ENCODE measurements at regions of chr3 and their contacts with region 1.

Region 1: GRCh38 chr3:190321789-190322603 is at the start of gene CLDN1:
- DNase-seq: peak; percentile 82 to 87
- ATAC-seq: peak; percentile 90 to 99 (median 96)
- H3K4me3 ChIP-seq: peak within 1 kb of the TSS; percentile 73
- H3K27ac ChIP-seq: no peak within 1 kb of the TSS
- H3K4me1 ChIP-seq: no peaks in the 10 kb centered on the region
- H3K27me3 ChIP-seq: no peaks in the 10 kb centered on the region
- CTCF ChIP-seq: peak; percentile 97
- total RNA-seq, gene CLDN1: 0.25 to 0.62 (median 0.39) TPM in 3 of 4 donors, not detected in the other

Region 2: GRCh38 chr3:189961525-189962161 is 360.4 kb before region 1 on chr3:
- intact Hi-C with region 1: loop called (anchors 5 kb)
- DNase-seq: peak; percentile 70 to 76
- ATAC-seq: peak; percentile 74 to 95 (median 87)
- H3K4me3 ChIP-seq: no peak overlapping the region
- H3K27ac ChIP-seq: no peak overlapping the region
- H3K4me1 ChIP-seq: no peaks in the 10 kb centered on the region
- H3K27me3 ChIP-seq: no peaks in the 10 kb centered on the region
- CTCF ChIP-seq: peak; percentile 91

Region 3: DNA sequence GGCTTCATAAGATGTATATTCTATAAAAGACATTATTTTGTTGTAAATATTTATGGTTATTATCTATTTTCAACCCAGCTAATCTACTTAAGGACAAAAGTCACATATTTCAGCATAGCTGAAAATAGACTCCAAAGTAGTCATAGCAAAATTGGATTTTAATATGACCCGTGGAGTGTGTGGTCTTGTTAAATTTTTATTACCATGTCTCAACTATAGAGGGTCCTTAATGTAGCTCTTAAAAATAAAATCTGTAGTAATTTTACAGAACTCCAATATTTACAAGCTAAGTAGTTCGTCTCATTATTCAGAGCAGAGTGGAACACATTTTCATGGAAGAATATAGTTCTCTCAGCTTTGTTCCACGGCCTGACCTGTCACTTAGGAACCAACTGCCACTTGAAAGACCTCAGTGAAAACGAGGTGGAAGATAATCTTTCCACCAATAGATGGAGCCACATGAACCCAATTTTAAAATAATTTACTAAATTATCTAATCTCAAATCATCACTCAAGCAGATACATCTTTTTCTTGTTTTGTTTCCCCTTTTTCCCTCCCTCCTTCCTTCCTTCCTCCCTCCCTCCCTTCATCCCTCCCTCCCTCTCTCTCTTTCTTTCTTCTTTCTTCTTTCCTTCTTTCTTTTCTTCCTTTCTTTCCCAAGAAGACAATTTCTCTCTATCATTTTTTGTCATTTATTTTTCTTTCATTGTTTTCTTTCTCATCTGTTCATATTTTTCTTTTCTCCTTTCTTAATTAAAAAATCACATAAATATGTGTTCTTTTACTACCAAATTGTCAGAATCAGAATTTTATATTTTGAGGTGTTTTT is 96.9 kb before region 1 on chr3:
- intact Hi-C with region 1: loop called (anchors 5 kb)
- DNase-seq: no peak
- ATAC-seq: no peak
- H3K4me3 ChIP-seq: no peak overlapping the region
- H3K27ac ChIP-seq: no peak overlapping the region
- H3K4me1 ChIP-seq: no peaks in the 10 kb centered on the region
- H3K27me3 ChIP-seq: no peaks in the 10 kb centered on the region
- CTCF ChIP-seq: peak; percentile 39